Pancreas (tissue), 10 donors: ENCODE measurements at regions of chr7 and their contacts with region 1.

Region 1: GRCh38 chr7:97506728-97507127 is 225.2 kb upstream of the TAC1 start:
- DNase-seq: no peak
- ATAC-seq: no peak
- H3K4me3 ChIP-seq: no peak overlapping the region
- H3K27ac ChIP-seq: no peak overlapping the region
- H3K4me1 ChIP-seq: no peaks in the 10 kb centered on the region
- H3K27me3 ChIP-seq: no peaks in the 10 kb centered on the region
- CTCF ChIP-seq: no peak

Region 2: DNA sequence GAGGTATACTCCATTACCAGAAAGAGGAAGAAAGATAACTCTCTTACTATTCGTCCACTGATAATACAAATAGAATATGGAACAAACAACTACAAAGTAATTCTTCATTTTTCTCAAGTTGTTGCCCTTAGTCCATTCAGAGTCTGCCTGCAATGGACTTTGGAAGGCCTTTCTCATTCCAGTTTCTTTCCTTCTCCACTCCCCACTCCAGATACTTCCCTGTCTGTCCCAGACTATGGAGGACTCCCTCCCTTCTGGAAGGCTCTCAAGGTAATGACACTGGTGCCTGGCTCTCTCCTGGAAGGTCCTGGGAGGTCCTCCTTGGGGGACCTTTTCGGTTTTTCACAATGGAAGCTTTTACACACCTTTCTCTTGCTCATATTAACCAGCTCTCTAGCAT is 221.4 kb before region 1 on chr7:
- intact Hi-C with region 1: no loop called
- DNase-seq: no peak
- ATAC-seq: no peak
- H3K4me3 ChIP-seq: no peak overlapping the region
- H3K27ac ChIP-seq: no peak overlapping the region
- H3K4me1 ChIP-seq: no peaks in the 10 kb centered on the region
- H3K27me3 ChIP-seq: no peaks in the 10 kb centered on the region
- CTCF ChIP-seq: no peak

Region 3: DNA sequence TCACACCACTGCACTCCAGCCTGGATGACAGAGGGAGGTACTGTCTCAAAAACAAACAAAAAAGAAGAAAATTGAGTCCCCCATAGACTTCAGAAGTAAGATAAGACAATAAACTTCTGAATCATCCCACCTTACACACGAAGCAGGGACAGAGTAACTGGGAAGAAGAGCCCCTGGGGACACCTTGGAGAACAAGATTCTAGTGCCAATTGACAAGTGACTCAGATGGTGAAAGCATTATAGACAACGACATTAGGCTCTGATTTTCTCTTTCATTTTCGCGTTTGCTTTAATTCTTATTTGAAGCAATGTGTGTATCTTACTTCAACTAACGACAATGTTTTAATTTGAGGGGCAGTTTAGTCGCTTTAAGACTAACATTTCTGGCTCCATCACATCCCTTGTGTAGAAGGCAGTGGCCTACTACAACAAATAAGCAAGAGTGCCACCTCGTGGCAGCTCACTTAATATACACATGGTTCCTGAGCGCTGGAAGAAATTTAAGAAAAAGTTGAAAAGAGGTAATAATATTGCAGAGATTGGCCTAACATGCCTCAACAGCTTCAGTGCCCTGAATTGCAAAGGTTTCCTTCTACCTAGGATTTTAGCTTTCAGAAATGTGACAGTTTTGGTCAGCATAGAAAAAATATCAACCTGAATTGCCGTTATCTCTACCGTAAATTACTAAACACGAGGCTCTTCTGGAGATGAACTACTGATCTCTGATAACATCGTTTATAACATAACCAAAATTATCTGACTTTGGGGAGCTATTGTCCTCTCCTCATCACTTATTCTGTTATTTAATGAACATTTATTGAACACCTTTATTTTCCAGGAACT is 328.8 kb after region 1 on chr7:
- intact Hi-C with region 1: loop called in 1 of 3 experiments (anchors 10 kb)
- DNase-seq: peak in 5 of 6 donors; percentile 22 to 85 (median 55)
- ATAC-seq: peak in 3 of 4 donors; percentile 86 to 88 (median 86)
- H3K4me3 ChIP-seq: no peak overlapping the region
- H3K27ac ChIP-seq: no peak overlapping the region
- H3K4me1 ChIP-seq: no peaks in the 10 kb centered on the region
- H3K27me3 ChIP-seq: no peaks in the 10 kb centered on the region
- CTCF ChIP-seq: peak; percentile 30 to 71 (median 55)